Activated T-helper 1 cell treated with anti-CD3 and anti-CD28 coated beads, Interleukin-12 subunit alpha, Interleukin-12 subunit beta, Interleukin-2, Interleukin-4 antibody, amounts not matched to agents 30 ng/mL and 10 ng/mL and 1 ng/mL, durations not matched to agents 14 hours and 24 hours and 36 hours (primary cell): ENCODE measurements at regions of chr12 and their contacts with region 1.

Region 1: GRCh38 chr12:76158518-76159321 is 74.2 kb upstream of the NAP1L1 start:
- DNase-seq: peak; percentile 67
- H3K4me3 Mint-ChIP-seq: peak overlapping the region; percentile 47
- H3K27ac Mint-ChIP-seq: peak overlapping the region; percentile 84
- H3K4me1 Mint-ChIP-seq: peaks cover 18% of the 10 kb centered on the region
- H3K27me3 Mint-ChIP-seq: peaks cover 27% of the 10 kb centered on the region

Region 2: GRCh38 chr12:75641031-75641780 is 517.5 kb before region 1 on chr12:
- intact Hi-C with region 1: loop called (anchors 2 kb)
- DNase-seq: peak; percentile 32
- H3K4me3 Mint-ChIP-seq: peak overlapping the region; percentile 19
- H3K27ac Mint-ChIP-seq: peak overlapping the region; percentile 89
- H3K4me1 Mint-ChIP-seq: peaks cover 34% of the 10 kb centered on the region
- H3K27me3 Mint-ChIP-seq: no peaks in the 10 kb centered on the region

Region 3: DNA sequence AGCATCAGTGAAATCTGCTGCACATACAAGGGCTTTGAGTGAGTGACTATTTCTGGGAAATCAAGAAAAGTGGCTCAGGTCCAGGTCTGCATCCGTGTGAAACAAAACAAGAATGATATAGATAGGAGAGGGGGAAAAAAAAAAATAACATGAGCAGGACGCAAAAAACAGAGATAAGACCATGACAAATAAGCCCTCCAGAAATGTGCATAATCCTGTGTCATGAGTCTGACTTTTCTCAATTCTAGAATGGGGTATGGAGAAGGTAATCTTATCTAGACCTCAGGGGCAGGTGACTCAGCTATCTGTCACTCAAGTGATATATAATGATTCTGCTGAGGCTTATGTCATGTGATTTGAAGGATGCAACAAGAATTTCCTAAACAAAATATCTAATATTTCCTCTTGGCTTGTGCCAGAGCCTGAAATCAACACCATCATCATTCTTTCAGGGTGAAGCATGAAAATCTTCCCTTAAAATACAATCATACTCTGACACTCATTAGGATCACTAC is 377.1 kb before region 1 on chr12:
- intact Hi-C with region 1: no loop called
- DNase-seq: no peak
- H3K4me3 Mint-ChIP-seq: no peak overlapping the region
- H3K27ac Mint-ChIP-seq: no peak overlapping the region
- H3K4me1 Mint-ChIP-seq: peaks cover 4% of the 10 kb centered on the region
- H3K27me3 Mint-ChIP-seq: peaks cover 25% of the 10 kb centered on the region

Region 4: DNA sequence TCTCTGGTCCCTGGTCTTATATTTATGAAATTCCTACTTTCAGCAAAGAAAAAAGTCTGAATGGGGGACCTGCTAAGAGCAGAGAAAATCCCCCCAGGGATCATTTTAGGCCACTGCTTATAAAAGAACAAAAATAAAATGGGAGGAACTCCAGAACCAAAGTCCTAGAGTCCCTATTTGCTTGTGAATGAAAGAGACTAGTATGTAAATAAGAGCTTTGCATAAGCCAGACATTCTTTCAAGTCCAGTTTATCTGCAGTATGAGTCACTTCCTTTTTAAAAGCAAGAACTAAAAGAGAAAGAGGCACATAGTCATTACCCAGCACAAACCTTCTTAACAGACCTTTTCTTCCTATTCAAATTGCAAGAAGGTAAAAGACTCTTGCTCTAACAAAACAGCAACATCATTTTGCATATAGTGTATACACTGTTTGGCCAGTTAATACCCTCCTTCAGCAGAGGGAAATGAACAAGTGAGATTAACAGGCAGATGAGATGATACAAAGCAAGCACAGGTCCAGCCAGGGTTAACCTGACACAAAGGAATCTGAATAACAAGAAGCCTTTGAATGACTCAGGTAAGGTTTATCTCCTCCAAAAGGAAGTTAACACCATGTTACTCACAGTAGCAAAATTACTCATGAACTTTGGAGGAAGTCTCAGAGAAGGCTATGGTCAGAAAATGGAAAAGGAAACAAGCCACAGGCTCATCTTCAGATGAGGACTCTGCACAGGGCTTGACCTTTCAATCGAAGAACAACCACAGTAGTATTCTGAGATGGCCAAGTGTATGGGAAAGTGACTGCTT is 214.4 kb before region 1 on chr12:
- intact Hi-C with region 1: loop called (anchors 1 kb)
- DNase-seq: peak; percentile 27
- H3K4me3 Mint-ChIP-seq: peak overlapping the region; percentile 65
- H3K27ac Mint-ChIP-seq: peak overlapping the region; percentile 98
- H3K4me1 Mint-ChIP-seq: peaks cover 30% of the 10 kb centered on the region
- H3K27me3 Mint-ChIP-seq: no peaks in the 10 kb centered on the region

Region 5: DNA sequence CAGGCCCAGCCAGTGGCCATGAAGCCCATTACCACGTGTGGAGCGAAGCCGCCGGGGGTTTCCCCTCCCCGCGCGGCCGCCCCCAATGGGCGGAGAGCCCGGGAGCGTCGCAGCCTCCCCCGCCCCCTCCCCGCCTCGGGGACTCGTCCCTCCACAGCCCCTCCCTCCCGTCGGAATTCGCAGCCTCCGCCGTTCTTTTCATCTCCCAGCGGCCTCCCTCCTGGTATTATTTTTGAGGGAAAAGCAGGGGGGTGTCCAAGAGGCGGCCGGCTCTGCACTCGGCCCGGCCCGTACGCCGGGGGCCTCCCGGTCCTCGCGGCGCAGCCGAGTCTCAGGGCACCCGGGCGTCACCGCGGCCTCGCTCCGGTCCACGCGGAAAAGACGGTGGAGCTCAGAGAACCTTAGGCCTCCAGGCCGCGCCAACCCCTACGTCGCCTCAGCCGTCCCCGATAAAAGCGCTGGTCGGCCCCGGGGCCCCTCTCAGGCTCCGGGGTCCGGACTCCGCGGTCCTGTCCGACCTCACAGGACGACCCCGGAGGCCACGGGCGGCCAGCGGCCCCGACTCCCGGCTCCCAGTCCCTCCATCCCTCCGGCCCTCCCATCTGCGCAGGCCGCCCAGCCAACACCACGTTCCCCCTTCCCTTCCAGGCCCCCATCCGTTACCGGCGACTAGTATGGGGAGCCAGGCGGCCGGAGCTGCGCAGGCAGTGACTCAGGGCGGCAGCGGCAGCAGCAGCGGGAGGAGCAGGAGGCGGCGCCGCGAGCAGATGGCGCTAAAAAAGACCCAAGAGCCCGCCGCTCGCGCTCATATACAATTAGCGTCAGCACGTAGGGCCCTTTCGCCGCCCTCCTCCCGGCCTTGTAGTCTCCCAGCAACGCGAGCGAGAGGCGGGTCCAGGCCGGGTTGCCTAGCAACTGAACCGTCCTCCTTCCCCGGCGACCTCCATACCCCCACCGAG is 74.5 kb before region 1 on chr12 and contains the start of gene NAP1L1:
- intact Hi-C with region 1: loop called (anchors 1 kb)
- DNase-seq: peak; percentile 96
- H3K4me3 Mint-ChIP-seq: peak within 1 kb of the TSS; percentile 100
- H3K27ac Mint-ChIP-seq: peak within 1 kb of the TSS; percentile 100
- H3K4me1 Mint-ChIP-seq: peaks cover 62% of the 10 kb centered on the region
- H3K27me3 Mint-ChIP-seq: no peaks in the 10 kb centered on the region
- total RNA-seq, gene NAP1L1: 584 and 605 TPM in 2 replicates

Region 6: DNA sequence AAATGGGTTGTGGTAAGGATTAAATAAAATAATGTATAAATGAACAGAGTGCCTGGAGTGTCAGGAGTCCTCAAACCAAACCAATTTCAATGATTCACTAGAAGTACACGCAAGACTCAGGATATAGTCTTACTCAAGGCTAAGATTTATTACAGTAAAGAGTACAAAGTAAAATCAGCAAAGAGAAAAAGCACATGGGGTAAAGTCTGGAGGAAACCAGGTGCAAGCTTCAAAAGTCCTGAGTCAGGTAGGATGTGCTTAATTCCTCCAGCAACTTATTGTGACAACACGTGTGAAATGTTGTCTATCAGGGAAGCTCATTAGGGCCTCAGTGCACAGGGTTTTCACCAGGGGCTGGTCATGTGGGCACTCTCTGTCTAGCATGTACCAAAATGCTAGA is 31.6 kb after region 1 on chr12:
- intact Hi-C with region 1: no loop called
- DNase-seq: no peak
- H3K4me3 Mint-ChIP-seq: no peak overlapping the region
- H3K27ac Mint-ChIP-seq: no peak overlapping the region
- H3K4me1 Mint-ChIP-seq: no peaks in the 10 kb centered on the region
- H3K27me3 Mint-ChIP-seq: peaks cover 21% of the 10 kb centered on the region

Region 7: DNA sequence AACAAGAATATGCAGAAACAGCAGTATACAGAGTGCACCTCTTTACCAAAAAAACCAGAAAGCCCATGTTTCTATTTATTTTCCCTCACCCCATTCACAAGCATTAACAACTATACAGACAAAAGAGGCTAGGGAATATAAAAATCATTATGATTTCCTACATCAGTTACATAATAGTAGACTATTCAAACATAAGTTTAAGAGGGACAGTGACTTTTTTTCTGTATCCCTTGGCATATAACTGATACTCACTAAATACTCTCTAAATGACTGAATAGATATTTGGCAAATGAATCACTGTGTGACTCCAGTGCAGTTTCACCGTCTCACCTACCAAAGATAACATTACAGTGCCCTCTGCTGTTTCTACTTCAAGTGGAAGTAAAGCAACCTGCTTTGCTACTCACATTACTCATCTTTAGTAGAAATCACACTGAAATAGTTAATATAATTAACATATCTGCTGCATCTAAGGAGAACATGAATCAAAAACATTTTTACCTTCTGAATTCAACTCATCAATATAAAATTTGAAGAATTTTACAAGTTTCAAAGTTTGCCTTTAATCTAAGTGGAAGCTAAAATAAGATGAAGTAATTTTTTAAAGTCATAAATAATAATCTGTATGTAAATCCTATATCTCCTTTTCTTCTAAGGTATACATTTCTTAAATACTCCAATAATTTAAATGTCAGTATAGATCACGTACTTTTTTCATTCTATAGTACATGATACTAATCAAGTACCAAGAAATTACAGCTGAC is 297.0 kb after region 1 on chr12:
- intact Hi-C with region 1: loop called (anchors 2 kb)
- DNase-seq: peak; percentile 5
- H3K4me3 Mint-ChIP-seq: no peak overlapping the region
- H3K27ac Mint-ChIP-seq: no peak overlapping the region
- H3K4me1 Mint-ChIP-seq: peaks cover 15% of the 10 kb centered on the region
- H3K27me3 Mint-ChIP-seq: no peaks in the 10 kb centered on the region